AG04449 (cell line): ENCODE measurements at regions of chr17 and their contacts with region 1.

Region 1: DNA sequence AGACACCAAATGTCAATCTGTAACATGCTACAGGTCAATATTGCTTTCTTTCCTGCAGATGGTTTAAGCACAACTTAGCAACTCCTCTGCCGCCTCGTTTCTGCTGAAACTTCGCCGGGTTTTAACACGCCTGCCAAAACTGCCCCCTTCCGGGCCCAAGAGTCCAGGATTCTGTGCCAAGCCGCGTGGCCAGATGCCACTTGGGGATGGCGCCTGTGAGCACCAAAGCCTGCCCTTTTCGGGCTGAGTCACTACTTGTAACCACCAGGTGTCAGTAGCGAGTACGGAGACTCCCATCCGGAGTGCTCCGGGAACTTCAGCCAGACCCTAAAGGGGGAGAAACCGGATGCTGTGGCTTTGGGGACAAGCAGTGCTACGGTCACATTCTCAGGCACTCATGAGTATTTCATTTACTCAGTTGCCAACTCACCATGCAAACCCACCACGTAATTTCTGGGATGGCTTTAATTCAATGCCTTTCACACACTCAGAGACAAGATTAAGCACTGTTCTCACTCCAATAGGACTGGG is 7.8 kb downstream of the PMP22 start:
- DNase-seq: no peak
- H3K4me3 ChIP-seq: peak overlapping the region; percentile 19; the same call in 1 of the 2 replicates
- CTCF ChIP-seq: peak; percentile 91

Region 2: DNA sequence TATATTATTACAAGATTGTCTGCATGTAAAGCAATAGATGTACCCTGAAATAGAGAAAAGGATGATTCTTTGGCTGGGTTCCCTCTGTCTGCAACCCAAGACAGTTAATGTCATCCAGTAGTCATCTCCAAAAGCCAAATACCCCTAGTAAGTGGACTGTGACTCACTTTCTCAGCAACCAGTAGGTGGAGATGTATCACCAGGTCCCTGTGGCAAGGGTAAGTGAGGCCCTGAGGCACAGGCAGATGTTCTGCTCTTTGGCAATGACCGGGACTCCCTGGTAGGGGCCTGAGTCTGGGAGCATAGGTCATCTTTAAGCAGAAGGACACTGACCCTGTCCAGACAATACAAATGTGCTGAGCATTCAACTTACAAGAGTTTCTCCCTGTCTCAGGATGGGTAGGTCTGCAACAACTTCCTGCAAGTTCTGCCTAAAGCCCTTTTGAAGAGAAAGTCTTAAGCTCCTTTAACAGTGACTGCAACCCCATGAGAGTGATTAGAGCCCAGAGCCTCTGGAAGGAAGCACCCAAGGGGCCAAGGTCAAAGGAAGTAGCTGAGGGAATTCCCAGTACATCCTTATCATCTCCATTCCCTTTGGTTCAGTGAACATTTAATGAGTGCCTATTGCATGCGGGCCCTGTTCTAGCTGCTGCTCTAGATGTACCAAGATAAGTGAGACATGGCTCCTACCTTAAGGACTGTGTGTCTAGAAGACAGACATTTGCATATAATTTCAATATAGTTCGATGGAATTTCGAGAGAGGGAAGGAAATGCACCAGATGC is 24.1 kb before region 1 on chr17:
- CTCF ChIA-PET with region 1: interaction called, 53 read pairs
- POLR2A ChIA-PET with region 1: no interaction called
- DNase-seq: peak; percentile 31
- H3K4me3 ChIP-seq: no peak overlapping the region
- CTCF ChIP-seq: peak; percentile 54

Region 3: DNA sequence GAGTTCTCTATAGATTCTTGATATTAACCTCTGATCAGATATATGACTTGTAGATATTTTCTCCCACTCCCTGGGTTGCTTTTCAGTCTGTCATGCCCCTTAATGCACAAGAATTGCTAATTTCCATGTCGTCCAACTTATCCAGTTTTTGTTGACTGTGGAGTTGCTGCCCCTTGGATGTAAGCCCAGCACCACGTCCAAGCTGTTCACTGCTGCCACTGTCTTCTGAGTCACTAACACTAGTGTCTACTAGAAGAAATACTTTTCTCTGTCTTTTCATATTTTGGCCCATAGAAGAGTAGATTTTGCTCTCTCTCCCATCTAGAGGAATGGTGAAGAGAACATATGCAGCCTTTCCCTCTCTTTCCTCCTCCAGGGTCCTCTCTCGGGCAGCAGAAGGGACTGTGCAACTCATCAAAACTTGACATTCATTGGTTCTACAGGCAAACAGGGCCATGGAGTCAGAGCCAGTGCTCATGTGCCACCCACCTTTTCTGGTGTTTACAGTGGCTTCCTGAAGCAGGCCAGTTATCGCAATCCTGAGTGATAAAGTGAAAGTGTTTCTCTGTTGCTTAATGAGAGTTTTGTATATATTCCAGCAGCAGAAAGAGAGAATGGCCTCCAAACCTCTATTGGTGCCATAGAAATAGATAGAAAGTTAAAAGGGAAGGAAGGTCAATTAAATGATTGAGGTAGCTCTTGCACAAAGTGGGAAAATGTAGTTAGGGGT is 30.4 kb after region 1 on chr17:
- CTCF ChIA-PET with region 1: no interaction called
- POLR2A ChIA-PET with region 1: no interaction called
- DNase-seq: no peak
- H3K4me3 ChIP-seq: no peak overlapping the region
- CTCF ChIP-seq: no peak

Region 4: DNA sequence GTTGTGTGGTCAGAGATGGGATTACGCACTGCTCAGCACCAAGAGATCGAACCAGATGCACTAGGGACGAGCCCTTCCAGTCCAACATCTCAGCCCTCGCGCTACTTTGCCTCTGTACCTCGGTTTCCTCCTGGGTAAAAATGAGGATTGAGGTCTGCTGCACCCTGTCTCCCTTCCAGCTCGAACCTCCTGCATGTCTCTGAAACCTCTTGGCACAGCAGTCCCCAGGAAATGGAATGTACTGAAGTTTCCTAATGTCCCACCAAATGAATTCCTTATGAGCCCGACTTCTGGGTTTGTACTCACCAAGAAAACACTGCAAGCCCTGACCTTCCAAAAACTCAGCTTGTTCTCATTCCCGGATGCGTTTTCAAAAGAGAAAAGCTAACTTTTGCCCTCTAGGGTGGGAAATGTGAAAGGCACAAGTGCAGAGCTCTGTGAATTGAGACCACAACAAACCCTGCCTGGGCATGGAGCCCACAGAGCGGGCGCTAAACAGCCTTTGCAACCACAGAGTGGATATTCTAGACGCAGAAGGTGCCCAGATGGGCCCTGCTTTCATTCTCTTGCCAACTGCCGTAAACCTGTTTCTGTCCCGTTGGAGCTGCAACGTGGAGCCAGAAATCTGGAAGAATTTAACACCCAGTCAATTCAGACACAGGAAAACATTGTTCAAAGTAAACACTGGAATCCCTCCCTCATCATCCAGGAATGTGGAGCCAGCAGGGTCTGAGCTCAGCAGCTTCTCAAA is 199.8 kb after region 1 on chr17:
- CTCF ChIA-PET with region 1: interaction called, 35 read pairs
- POLR2A ChIA-PET with region 1: interaction called, 3 read pairs
- DNase-seq: peak; percentile 52
- H3K4me3 ChIP-seq: peak overlapping the region; percentile 31
- CTCF ChIP-seq: peak; percentile 54

Region 5: DNA sequence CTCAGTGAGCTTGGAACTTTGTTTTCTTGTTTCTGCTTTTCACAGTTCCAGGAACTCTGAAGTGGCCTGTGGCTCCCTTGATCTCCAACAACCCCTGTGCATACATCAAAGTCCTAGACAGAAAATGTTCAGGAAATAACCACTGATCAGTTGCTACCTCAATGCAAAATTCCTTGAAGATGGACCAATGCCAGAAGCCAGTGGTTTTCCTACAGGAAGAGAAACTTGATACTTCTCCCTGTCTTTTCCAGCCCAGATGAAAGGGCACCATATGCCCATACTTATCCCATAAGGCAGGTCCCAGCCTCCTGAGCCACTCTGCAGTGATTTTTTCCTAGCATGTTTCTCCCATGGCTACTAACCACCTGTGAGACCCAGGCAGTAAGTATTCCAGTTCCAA is 222.4 kb after region 1 on chr17:
- CTCF ChIA-PET with region 1: interaction called, 13 read pairs
- POLR2A ChIA-PET with region 1: no interaction called
- DNase-seq: no peak
- H3K4me3 ChIP-seq: no peak overlapping the region
- CTCF ChIP-seq: no peak

Region 6: DNA sequence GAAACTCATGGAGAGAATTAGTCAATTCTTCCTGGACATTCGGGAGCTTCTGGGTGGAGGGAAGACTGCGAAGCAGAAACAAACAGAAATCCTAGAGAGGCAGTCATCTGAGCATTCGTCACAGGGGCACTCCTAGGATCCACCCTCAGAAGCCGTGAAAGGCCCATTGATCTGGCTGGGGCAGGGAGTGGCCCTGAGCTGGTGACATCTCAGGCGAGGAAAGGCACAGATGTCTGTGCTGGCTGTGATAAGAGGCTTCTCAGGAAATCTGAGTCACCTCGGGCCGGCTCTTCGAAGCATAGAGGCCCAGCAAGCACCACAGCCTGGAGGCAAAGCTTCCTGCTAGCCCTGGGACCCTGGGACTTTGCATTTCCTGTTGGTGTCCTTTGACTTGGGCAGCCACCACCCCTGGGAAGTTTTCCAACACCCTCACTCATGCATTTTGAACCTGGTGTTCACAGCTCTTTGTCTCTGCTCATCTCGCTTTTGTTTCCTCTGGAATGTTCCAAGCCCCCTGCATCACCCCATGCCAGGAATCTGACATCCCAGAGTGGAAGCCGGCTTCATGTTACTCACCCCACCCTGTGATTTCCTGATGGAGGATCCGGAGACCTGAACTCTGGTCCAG is 233.4 kb after region 1 on chr17:
- CTCF ChIA-PET with region 1: interaction called, 318 read pairs
- POLR2A ChIA-PET with region 1: interaction called, 3 read pairs
- DNase-seq: no peak
- H3K4me3 ChIP-seq: no peak overlapping the region
- CTCF ChIP-seq: no peak

Region 7: GRCh38 chr17:15510361-15510760 is 253.0 kb after region 1 on chr17:
- CTCF ChIA-PET with region 1: interaction called, 38 read pairs
- POLR2A ChIA-PET with region 1: no interaction called
- DNase-seq: peak; percentile 53
- H3K4me3 ChIP-seq: no peak overlapping the region
- CTCF ChIP-seq: no peak